MCF 10A (cell line): ENCODE measurements at regions of chr7 and their contacts with region 1.

Region 1: GRCh38 chr7:83162402-83163256 is at the start of gene PCLO:
- DNase-seq: peak; percentile 62
- H3K4me3 Mint-ChIP-seq: peak within 1 kb of the TSS; percentile 83
- H3K27ac Mint-ChIP-seq: peak within 1 kb of the TSS; percentile 23
- H3K4me1 Mint-ChIP-seq: peaks cover 7% of the 10 kb centered on the region
- H3K27me3 Mint-ChIP-seq: no peaks in the 10 kb centered on the region
- CTCF ChIP-seq: no peak
- total RNA-seq, gene PCLO: 2.0 and 2.3 TPM in 2 replicates

Region 2: GRCh38 chr7:83148776-83149175 is 13.9 kb before region 1 on chr7:
- CTCF ChIA-PET with region 1: no interaction called
- POLR2A ChIA-PET with region 1: interaction called, 12 read pairs
- intact Hi-C with region 1: no loop called
- DNase-seq: peak; percentile 6
- H3K4me3 Mint-ChIP-seq: no peak overlapping the region
- H3K27ac Mint-ChIP-seq: no peak overlapping the region
- H3K4me1 Mint-ChIP-seq: peaks cover 23% of the 10 kb centered on the region
- H3K27me3 Mint-ChIP-seq: no peaks in the 10 kb centered on the region
- CTCF ChIP-seq: no peak

Region 3: GRCh38 chr7:83178796-83179195 is 16.2 kb after region 1 on chr7:
- CTCF ChIA-PET with region 1: no interaction called
- POLR2A ChIA-PET with region 1: no interaction called
- intact Hi-C with region 1: no loop called
- DNase-seq: no peak
- H3K4me3 Mint-ChIP-seq: no peak overlapping the region
- H3K27ac Mint-ChIP-seq: no peak overlapping the region
- H3K4me1 Mint-ChIP-seq: no peaks in the 10 kb centered on the region
- H3K27me3 Mint-ChIP-seq: peaks cover 13% of the 10 kb centered on the region
- CTCF ChIP-seq: no peak

Region 4: GRCh38 chr7:83190659-83191389 is 28.2 kb after region 1 on chr7:
- CTCF ChIA-PET with region 1: no interaction called
- POLR2A ChIA-PET with region 1: no interaction called
- intact Hi-C with region 1: no loop called
- DNase-seq: no peak
- H3K4me3 Mint-ChIP-seq: no peak overlapping the region
- H3K27ac Mint-ChIP-seq: no peak overlapping the region
- H3K4me1 Mint-ChIP-seq: no peaks in the 10 kb centered on the region
- H3K27me3 Mint-ChIP-seq: peaks cover 37% of the 10 kb centered on the region
- CTCF ChIP-seq: no peak